Breast epithelium (tissue), 4 donors: ENCODE measurements at regions of chr19 and their contacts with region 1.

Region 1: DNA sequence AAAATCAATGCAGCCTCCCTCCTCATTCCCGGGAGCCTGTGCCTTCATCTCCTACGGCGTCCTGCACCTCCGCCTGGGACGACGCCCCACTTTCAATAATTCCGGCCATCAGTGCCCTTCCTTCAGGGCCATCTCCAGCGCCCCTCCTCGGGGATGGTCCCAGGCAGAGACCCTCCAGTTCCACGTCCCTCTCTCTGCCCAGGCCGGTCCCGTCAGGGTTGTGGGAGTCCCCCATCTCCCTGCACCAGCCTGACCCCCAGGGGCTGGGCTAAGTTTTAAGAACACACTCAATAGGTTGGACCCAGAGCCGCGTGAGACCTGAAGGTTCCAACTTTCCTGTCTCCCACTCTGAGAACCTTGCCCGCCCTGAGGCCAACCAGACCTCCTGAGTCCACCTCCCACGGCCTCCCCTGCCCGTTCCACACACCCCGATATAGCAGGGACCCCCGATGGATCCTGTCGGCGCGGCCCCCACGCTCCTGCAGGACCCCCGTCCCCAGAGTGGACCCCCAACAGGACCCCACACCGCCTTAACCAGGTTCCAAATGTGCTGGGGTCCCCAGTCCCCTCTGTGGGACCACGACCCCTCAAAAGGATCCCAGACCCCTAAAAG is 616 bp downstream of the TMEM161A start:
- DNase-seq: no peak
- H3K4me3 ChIP-seq: peak overlapping the region; percentile 59 to 86 (median 83)
- H3K27ac ChIP-seq: peak overlapping the region; percentile 27 to 80
- H3K4me1 ChIP-seq: no peaks in the 10 kb centered on the region
- H3K27me3 ChIP-seq: no peaks in the 10 kb centered on the region
- CTCF ChIP-seq: no peak
- POLR2A ChIP-seq: no peak

Region 2: DNA sequence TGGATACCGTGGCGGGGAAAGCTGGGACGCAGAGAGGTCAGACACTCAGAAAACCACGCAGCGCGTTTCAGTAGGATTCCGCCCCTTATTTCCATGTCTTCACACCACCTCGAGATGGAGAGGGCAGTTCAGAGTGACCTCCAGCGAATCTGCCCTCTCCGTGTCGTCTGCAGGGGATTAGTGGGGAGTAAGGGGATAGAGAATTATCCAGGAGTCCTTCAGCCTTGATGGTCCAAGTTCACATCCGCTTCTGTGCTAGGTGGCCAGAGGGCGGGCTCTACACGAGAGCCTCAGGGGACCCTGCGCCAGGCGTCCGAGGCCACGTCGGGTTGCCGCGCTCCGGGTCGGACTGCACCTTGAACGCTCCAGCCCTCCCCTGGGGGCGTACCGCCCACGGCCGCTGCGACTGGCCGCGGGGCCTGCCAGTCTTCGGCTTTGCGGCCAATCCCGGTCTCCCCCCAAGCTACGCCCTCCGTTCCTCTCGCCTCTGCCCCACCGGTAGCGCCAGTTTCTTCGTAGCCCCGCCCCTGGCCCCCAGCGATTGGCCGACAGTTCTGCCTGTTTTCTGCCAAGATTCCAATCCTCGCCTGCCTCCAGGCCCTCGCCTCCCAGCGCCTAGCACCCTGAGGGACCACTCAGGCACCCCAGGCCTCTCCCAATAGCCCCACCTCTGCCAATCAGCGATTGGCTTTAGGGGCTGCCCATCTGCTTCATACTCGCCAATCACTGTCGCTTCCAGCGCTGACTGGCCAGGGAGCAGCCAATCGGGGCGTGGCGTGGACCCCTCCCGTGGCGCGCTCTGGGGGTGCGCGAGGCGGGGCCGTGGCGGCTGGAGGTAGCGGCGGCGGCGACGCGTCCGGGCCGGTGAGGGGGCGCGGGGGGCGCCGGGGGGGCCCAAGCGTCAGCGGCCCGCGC is 74.2 kb before region 1 on chr19 and contains the start of gene SLC25A42:
- intact Hi-C with region 1: loop called (anchors 1 kb)
- DNase-seq: peak; percentile 96 to 97
- H3K4me3 ChIP-seq: peak within 1 kb of the TSS; percentile 73 to 90 (median 87)
- H3K27ac ChIP-seq: peak within 1 kb of the TSS; percentile 74 to 88
- H3K4me1 ChIP-seq: peaks cover 0 to 9% of the 10 kb centered on the region in 2 donors
- H3K27me3 ChIP-seq: no peaks in the 10 kb centered on the region
- CTCF ChIP-seq: no peak
- POLR2A ChIP-seq: no peak
- total RNA-seq, gene SLC25A42: 6.4 to 12.8 (median 9.8) TPM

Region 3: DNA sequence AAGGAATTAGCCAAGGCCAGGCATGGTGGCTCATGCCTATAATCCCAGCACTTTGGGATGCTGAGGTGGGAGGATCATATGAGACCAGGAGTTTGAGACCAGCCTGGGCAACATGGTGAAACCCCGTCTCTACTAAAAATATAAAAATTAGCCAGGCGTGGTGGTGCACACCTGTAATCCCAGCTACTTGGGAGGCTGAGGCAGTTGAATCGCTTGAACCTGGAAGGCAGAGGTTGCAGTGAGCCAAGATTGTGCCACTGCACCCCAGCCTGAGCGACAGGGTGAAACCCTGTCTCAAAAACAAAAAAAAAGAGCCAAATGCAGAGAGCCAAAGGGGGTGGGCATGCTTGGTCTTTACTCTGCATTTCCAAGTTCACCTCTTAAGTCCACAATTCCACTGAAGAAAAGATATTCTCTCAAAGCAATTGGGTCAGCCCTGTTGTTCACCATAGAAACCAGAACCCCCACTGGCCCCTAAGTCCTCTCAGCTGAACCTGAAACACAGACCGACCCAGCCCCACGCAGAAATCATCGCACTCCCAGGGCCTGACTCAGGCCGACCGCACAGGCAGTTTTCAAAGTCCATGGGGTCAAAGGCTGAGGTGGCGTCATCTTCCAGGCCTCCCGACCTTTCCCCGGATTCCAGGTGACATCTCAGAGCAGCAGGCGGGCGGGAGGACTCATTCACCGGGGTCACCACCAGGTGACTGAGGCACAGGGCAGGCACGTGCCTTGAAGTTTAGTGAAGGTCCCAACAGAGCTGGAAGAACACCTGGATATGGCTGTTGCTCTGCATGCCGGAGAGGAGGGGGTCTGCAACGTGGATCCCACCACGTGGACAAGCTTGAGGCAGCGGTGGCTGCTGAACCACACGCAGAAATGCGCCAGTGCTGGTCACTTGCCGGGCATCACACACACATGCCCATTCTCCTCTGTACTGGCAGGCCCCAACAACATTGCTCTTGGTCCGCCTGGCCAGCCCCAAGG is 40.7 kb before region 1 on chr19:
- intact Hi-C with region 1: no loop called
- DNase-seq: no peak
- H3K4me3 ChIP-seq: no peak overlapping the region
- H3K27ac ChIP-seq: no peak overlapping the region
- H3K4me1 ChIP-seq: no peaks in the 10 kb centered on the region
- H3K27me3 ChIP-seq: no peaks in the 10 kb centered on the region
- CTCF ChIP-seq: no peak
- POLR2A ChIP-seq: no peak